Activated CD4-positive, alpha-beta T cell treated with anti-CD3 and anti-CD28 coated beads for 36 hours (primary cell): ENCODE measurements at regions of chr1 and their contacts with region 1.

Region 1: DNA sequence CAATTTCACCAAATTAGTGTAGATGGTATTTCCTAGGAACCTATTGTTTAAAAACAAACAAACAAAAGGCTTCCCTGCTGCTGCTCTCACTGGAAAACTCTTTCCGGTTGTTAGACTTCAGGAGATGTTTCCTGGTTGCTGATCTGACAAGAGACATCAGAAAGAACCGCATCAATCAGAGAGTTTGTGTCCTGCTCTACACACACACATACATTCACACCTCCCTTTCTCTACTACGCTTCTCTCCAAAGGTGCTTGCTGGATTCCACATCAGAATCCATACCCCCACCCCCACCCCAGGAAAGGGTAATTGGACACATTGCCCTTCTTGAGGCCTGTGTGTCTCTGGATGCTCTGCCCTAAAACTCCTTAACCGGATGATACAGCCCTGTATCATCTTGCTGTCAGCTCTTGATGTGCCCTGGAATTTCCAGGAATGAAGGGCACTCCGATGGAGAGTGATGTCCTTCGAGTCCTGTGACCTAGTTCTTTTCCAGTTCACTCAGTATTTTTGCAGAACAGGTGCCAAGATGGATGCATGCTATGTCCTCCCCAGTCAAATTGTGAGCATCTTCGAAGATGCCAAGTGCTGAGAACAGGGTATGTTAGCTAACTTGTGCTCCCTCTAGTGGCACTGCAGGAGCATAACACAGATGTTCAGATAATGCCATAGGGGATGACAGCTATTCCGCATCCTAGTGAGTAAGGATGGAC is 113.7 kb upstream of the SLC35F3 start:
- DNase-seq: peak; percentile 31
- ATAC-seq: peak; percentile 74
- H3K4me3 Mint-ChIP-seq: no peak overlapping the region
- H3K27ac Mint-ChIP-seq: no peak overlapping the region
- H3K4me1 Mint-ChIP-seq: no peaks in the 10 kb centered on the region
- H3K27me3 Mint-ChIP-seq: peaks cover 20% of the 10 kb centered on the region

Region 2: GRCh38 chr1:233364695-233365539 is 425.9 kb before region 1 on chr1:
- CTCF ChIA-PET with region 1: no interaction called
- POLR2A ChIA-PET with region 1: no interaction called
- intact Hi-C with region 1: loop called in 1 of 2 experiments (anchors 1 kb)
- DNase-seq: no peak
- ATAC-seq: no peak
- H3K4me3 Mint-ChIP-seq: no peak overlapping the region
- H3K27ac Mint-ChIP-seq: no peak overlapping the region
- H3K4me1 Mint-ChIP-seq: no peaks in the 10 kb centered on the region
- H3K27me3 Mint-ChIP-seq: peaks cover 5% of the 10 kb centered on the region

Region 3: DNA sequence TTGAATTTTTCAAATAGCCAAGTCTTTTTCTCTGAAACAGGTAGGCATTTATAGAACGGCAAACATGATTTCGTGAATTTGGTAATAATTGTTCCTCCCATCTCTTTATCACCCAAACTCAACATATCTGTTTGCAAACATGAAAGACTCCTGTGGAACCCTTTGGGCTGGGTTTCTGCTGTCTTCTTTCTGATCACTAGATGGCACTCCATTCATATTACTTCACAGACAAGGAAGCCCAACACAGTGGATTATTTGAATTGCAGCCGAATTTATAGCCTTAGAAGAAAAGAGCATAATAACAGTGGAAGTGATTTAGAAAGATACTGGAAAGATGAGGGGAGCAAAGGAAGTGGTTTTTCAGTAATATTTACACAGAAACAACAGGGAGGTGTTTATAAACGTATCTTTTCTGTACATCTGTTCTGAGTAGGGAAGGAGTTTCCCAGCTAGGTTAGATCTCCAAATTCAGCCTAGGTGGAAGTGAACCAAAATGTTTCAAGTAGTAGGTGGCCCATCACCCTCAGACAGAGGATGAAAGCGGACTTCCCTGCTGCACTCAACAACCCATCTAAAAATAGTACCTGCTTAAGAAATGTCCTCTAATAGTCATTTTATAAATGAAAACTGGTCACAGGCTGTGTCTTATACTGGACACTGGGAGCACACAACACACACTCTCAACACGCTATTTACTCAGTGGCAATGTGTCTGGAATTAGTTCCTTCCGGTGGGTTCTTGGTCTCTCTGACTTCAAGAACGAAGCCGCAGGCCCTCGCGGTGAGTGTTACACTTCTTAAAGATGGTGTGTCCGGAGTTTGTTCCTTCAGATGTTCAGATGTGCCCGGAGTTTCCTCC is 395.7 kb before region 1 on chr1:
- CTCF ChIA-PET with region 1: interaction called, 4 read pairs
- POLR2A ChIA-PET with region 1: no interaction called
- intact Hi-C with region 1: loop called (anchors 1 kb)
- DNase-seq: peak; percentile 27
- ATAC-seq: peak; percentile 75
- H3K4me3 Mint-ChIP-seq: no peak overlapping the region
- H3K27ac Mint-ChIP-seq: no peak overlapping the region
- H3K4me1 Mint-ChIP-seq: no peaks in the 10 kb centered on the region
- H3K27me3 Mint-ChIP-seq: peaks cover 26% of the 10 kb centered on the region

Region 4: DNA sequence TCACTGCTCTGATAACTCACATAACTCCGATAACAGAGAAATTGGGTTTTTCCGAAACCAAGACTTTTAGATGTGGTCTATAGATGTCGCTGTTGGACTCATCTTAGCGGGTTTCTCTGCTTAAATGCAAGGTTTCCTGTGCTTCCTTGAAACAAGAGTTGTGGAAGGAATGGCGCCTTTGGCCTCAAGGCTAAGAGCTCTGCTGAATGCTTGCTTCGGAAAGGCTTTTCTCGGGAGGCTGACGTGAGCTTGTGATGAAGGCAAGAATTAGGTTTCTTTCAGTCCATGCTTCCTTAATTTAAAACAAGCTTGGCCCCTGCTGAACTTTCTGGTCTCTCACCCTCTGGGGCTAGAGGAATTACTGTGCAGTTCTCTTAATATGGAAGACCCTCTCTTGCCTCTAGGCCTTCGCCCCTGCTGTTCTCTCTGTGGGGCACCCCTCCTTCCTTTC is 349.8 kb before region 1 on chr1:
- CTCF ChIA-PET with region 1: interaction called, 25 read pairs
- POLR2A ChIA-PET with region 1: no interaction called
- intact Hi-C with region 1: loop called (anchors 1 kb)
- DNase-seq: peak; percentile 7
- ATAC-seq: no peak
- H3K4me3 Mint-ChIP-seq: no peak overlapping the region
- H3K27ac Mint-ChIP-seq: no peak overlapping the region
- H3K4me1 Mint-ChIP-seq: no peaks in the 10 kb centered on the region
- H3K27me3 Mint-ChIP-seq: peaks cover 14% of the 10 kb centered on the region

Region 5: DNA sequence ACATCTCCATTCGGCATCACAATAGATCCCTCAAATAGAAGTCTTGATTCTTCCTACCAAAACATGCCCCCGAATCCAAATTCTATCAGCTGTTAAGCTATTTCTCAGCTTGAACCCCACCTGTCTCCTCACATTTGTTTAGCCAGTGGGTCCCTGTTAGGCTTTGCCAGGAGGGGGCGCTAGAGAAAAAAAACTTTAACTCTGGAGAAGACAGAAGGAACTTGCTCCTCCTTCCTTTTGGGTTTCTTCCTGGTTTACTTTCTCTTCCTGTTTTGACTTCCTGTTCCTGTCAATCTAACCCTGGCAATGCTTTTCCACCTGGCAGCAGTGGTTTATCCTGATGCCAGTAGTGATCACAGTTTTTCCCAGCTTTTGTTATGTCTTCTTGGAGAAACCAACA is 272.5 kb before region 1 on chr1:
- CTCF ChIA-PET with region 1: interaction called, 3 read pairs
- POLR2A ChIA-PET with region 1: no interaction called
- intact Hi-C with region 1: loop called in 1 of 2 experiments (anchors 1 kb)
- DNase-seq: peak; percentile 60
- ATAC-seq: no peak
- H3K4me3 Mint-ChIP-seq: no peak overlapping the region
- H3K27ac Mint-ChIP-seq: no peak overlapping the region
- H3K4me1 Mint-ChIP-seq: no peaks in the 10 kb centered on the region
- H3K27me3 Mint-ChIP-seq: peaks cover 16% of the 10 kb centered on the region